CD4-positive, alpha-beta memory T cell (primary cell): ENCODE measurements at regions of chr18 and their contacts with region 1.

Region 1: GRCh38 chr18:50111265-50111792 is 83.6 kb downstream of the MYO5B start:
- DNase-seq: no peak
- H3K4me3 ChIP-seq: no peak overlapping the region
- H3K4me3 Mint-ChIP-seq: no peak overlapping the region
- H3K27ac ChIP-seq: no peak overlapping the region
- H3K27ac Mint-ChIP-seq: no peak overlapping the region
- H3K4me1 ChIP-seq: no peaks in the 10 kb centered on the region
- H3K4me1 Mint-ChIP-seq: no peaks in the 10 kb centered on the region
- H3K27me3 ChIP-seq: peaks cover 4% of the 10 kb centered on the region
- H3K27me3 Mint-ChIP-seq: peaks cover 13 to 28% of the 10 kb centered on the region in 2 donors

Region 2: DNA sequence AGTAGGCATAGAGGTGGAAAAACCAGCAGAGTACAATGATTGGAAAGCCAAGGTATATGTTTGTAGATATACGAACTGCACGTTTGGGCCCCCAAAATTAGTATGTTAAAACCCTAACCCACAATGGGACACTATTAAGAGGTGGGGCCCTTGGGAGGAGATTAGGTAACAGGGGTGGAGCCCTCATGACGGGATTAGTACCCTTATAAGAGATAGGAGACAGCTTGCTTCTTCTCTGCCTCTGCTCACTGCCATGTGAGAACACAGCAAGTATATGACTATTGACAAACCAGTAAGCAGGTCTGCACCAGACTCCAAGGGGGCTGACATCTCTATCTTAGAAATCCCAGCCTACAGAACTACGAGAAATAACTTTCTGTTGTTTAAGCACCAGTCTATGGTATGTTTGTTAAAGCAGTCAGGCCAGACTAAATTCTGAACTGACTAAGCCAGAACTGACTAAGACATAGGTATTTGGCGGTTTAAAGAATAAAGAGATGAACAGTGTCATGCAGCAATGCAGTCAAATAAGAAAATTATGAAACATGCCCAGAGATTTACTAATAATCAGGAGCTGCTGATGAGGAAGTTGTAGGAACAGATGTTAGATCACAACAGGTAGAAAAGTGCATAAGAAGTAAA is 833.8 kb before region 1 on chr18:
- CTCF ChIA-PET with region 1: no interaction called
- POLR2A ChIA-PET with region 1: no interaction called
- intact Hi-C with region 1: loop called (anchors 5 kb)
- DNase-seq: no peak
- H3K4me3 ChIP-seq: no peak overlapping the region
- H3K4me3 Mint-ChIP-seq: no peak overlapping the region
- H3K27ac ChIP-seq: no peak overlapping the region
- H3K27ac Mint-ChIP-seq: no peak overlapping the region
- H3K4me1 ChIP-seq: no peaks in the 10 kb centered on the region
- H3K4me1 Mint-ChIP-seq: peaks cover 0 to 2% (median under 1%) of the 10 kb centered on the region in 4 donors
- H3K27me3 ChIP-seq: no peaks in the 10 kb centered on the region
- H3K27me3 Mint-ChIP-seq: no peaks in the 10 kb centered on the region

Region 3: GRCh38 chr18:50726960-50727589 is 615.7 kb after region 1 on chr18:
- CTCF ChIA-PET with region 1: no interaction called
- POLR2A ChIA-PET with region 1: no interaction called
- intact Hi-C with region 1: no loop called
- DNase-seq: no peak
- H3K4me3 ChIP-seq: no peak overlapping the region
- H3K4me3 Mint-ChIP-seq: no peak overlapping the region
- H3K27ac ChIP-seq: no peak overlapping the region
- H3K27ac Mint-ChIP-seq: no peak overlapping the region
- H3K4me1 ChIP-seq: no peaks in the 10 kb centered on the region
- H3K4me1 Mint-ChIP-seq: peaks cover 0 to 3% (median 0%) of the 10 kb centered on the region in 4 donors
- H3K27me3 ChIP-seq: no peaks in the 10 kb centered on the region
- H3K27me3 Mint-ChIP-seq: no peaks in the 10 kb centered on the region